HEK293 (cell line): ENCODE measurements at regions of chr9 and their contacts with region 1.

Region 1: DNA sequence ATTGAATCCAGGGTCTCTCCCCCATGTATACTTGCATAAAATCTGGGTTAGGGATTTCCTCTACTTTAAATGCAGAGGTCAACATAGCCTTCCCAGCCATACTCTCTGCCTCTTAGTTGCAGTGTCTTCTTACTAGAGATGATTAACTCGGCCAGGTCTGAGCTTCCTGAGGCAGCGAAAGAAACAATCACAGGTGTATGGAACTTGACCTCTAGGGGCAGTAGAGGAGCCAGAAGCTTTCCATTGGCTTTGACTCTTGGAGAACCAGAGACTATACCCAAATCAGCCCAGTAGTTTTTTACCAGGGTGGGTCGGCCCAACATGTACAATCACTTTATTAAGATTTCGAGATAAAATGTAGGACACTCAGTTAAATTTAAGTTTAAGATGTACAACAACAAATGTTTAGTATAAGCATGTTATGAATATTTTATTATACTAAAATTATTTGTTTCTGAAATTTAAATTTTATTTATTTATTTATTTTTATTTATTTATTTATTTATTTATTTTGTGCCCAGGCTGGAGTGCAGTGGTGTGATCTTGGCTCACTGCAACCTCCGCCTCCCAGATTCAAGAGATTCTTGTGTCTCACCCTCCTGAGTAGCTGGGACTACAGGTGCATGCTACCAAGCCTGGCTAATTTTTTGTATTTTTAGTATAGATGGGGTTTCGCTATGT is 48.0 kb upstream of the DMRT3 start:
- H3K4me3 ChIP-seq: no peak overlapping the region
- H3K27ac ChIP-seq: no peak overlapping the region
- H3K4me1 ChIP-seq: no peaks in the 10 kb centered on the region
- CTCF ChIP-seq: no peak

Region 2: DNA sequence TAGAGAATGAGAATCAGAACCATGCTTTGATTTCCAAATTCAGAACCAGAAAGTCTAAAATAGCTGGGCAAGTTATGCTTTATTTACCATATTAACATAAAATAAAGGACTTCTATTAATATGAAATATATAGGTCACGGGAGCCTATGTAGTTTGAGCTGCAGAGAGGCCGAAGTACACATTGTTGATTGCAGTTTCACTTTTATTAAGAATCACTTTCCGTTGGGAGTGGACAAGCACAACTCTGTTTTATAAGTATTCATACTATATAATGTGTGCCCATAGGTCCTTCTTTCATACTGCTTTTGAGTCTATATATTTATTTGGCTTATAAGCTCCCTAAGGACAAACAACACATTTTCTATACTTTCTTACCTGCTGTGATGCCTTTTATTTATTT is 10.8 kb before region 1 on chr9:
- CTCF ChIA-PET with region 1: interaction called, 23 read pairs
- POLR2A ChIA-PET with region 1: no interaction called
- H3K4me3 ChIP-seq: no peak overlapping the region
- H3K27ac ChIP-seq: no peak overlapping the region
- H3K4me1 ChIP-seq: no peaks in the 10 kb centered on the region
- CTCF ChIP-seq: no peak

Region 3: GRCh38 chr9:950139-950538 is 21.6 kb after region 1 on chr9:
- CTCF ChIA-PET with region 1: interaction called, 29 read pairs
- POLR2A ChIA-PET with region 1: interaction called, 3 read pairs
- H3K4me3 ChIP-seq: no peak overlapping the region
- H3K27ac ChIP-seq: no peak overlapping the region
- H3K4me1 ChIP-seq: no peaks in the 10 kb centered on the region
- CTCF ChIP-seq: no peak

Region 4: GRCh38 chr9:967903-968641 is 39.6 kb after region 1 on chr9:
- CTCF ChIA-PET with region 1: interaction called, 12 read pairs
- POLR2A ChIA-PET with region 1: no interaction called
- H3K4me3 ChIP-seq: peak overlapping the region; percentile 41
- H3K27ac ChIP-seq: no peak overlapping the region; the same call in 1 of the 2 replicates
- H3K4me1 ChIP-seq: peaks cover 19% of the 10 kb centered on the region
- CTCF ChIP-seq: no peak